Heart left ventricle (tissue), 16 donors: ENCODE measurements at regions of chr2 and their contacts with region 1.

Region 1: DNA sequence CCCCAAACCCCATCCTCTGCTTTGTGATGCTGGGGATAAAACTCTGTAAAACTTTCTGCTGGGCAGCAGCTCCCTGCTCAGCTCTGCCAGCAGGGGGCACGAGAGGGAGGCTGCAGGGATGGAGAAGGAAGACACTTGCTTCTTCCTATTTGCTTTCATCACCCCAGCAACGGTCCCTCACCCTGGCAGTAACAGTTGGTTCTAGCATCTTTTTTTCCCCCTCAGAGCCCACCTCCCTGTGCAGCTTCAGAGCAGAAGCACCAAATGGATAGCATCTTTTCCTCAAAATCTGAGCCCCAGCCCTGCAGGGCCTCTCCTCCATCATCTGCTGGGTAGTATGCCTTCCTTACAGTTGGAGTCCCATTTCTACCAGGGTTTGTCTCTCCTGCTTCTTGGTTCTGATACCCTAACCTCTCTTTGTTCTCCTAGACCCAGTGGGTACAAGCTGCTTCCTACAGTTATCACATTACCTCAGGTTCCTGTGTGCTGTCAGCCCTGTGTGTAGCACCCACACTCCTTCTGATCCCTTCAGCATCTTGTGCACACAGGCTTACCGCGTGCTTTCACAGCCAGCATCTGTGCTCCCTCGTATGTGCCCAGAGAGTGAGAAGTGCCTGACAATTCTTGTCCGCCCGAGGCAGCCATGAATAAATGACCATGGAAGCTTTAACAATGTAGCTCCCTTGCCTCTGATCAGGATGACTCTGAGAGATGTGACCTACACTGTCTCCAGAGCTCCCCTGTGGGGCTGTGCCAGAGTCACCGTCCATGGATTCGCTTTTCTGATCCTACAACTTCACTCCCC is 14.5 kb downstream of the CKAP2L start:
- DNase-seq: peak; percentile 61 to 90 (median 68)
- ATAC-seq: peak in 3 of 4 donors; percentile 73 to 74 (median 73)
- H3K4me3 ChIP-seq: no peak overlapping the region
- H3K27ac ChIP-seq: no peak overlapping the region
- H3K4me1 ChIP-seq: peaks cover 0 to 4% (median 0%) of the 10 kb centered on the region in 12 donors
- H3K27me3 ChIP-seq: no peaks in the 10 kb centered on the region
- CTCF ChIP-seq: peak; percentile 82 to 93 (median 86)
- POLR2A ChIP-seq: no peak

Region 2: GRCh38 chr2:112884869-112885505 is 135.0 kb after region 1 on chr2:
- intact Hi-C with region 1: loop called (anchors 2 to 10 kb)
- DNase-seq: peak in 3 of 5 donors; percentile 30 to 39 (median 35)
- ATAC-seq: peak in 1 of 4 donors; percentile 55
- H3K4me3 ChIP-seq: no peak overlapping the region
- H3K27ac ChIP-seq: no peak overlapping the region
- H3K4me1 ChIP-seq: peaks cover 0 to 36% (median 0%) of the 10 kb centered on the region in 12 donors
- H3K27me3 ChIP-seq: peaks cover 0 to 9% (median 0%) of the 10 kb centered on the region in 9 donors
- CTCF ChIP-seq: peak; percentile 46 to 82 (median 60)
- POLR2A ChIP-seq: no peak

Region 3: GRCh38 chr2:112941753-112942658 is 192.0 kb after region 1 on chr2:
- intact Hi-C with region 1: loop called (anchors 1 to 5 kb)
- DNase-seq: peak; percentile 37 to 76 (median 49)
- ATAC-seq: peak in 3 of 4 donors; percentile 72 to 85 (median 74)
- H3K4me3 ChIP-seq: no peak overlapping the region
- H3K27ac ChIP-seq: no peak overlapping the region
- H3K4me1 ChIP-seq: no peaks in the 10 kb centered on the region
- H3K27me3 ChIP-seq: peaks cover 0 to 18% (median 0%) of the 10 kb centered on the region in 9 donors
- CTCF ChIP-seq: peak; percentile 52 to 76 (median 64)
- POLR2A ChIP-seq: no peak

Region 4: DNA sequence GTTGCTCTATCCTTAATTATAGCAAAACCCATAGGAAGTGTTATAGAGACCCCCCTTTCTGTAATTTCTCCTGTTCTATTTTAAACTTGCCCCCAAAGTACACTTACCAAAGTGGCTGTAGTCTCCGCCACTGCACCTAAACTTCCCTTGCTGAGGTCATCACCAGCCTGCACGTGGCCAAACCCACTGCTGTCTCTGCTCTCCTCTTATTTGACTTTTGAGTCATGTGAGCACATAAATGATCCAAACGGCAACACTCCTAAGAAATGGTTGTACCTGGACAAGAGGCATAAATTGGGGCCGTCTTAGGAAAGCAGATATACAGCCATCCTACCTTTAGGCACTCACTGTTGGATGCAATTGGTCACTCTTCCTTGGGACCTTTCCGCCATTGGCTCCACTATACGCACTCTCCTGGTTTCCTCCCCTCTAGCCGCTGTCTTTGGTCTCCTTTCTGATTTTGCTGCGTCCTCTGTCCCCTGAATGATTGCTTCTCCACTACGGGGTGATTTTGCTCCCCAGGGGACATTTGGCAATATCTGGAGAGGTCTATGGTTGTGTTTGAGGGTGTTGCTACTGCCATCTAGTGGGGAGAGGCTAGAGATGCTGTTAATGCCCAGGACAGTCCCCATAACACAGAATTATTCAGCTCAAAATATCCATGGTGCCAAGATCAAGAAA is 208.6 kb after region 1 on chr2:
- intact Hi-C with region 1: loop called in 9 of 10 experiments (anchors 2 to 5 kb)
- DNase-seq: no peak
- ATAC-seq: peak in 3 of 4 donors; percentile 69 to 74 (median 73)
- H3K4me3 ChIP-seq: no peak overlapping the region
- H3K27ac ChIP-seq: no peak overlapping the region
- H3K4me1 ChIP-seq: no peaks in the 10 kb centered on the region
- H3K27me3 ChIP-seq: peaks cover 0 to 20% (median 0%) of the 10 kb centered on the region in 9 donors
- CTCF ChIP-seq: peak; percentile 54 to 81 (median 72)
- POLR2A ChIP-seq: no peak

Region 5: DNA sequence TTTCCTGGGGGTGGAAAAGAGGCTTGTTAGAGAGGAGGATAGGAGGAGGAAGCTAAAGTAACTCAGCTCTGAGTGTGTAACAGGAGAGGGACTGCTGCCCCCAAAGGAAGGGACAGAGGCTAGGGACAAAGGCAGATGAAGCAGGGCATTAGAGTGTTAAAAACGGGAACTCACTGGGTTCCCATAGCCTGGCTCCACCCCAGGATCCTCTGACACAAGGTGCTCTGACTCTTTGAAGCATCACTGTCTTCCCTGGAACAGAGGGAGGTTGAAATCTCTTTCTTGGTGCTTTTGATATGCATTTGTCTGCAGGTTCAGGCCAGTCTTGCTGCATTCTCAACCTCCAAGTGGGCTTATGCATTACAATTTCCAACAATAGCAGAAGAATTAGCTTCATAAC is 278.2 kb after region 1 on chr2:
- intact Hi-C with region 1: no loop called
- DNase-seq: no peak
- ATAC-seq: no peak
- H3K4me3 ChIP-seq: no peak overlapping the region
- H3K27ac ChIP-seq: no peak overlapping the region
- H3K4me1 ChIP-seq: no peaks in the 10 kb centered on the region
- H3K27me3 ChIP-seq: peaks cover 0 to 32% (median 6%) of the 10 kb centered on the region in 9 donors
- CTCF ChIP-seq: no peak
- POLR2A ChIP-seq: no peak